ENCODE measurements at regions of chr2 and their contacts with region 1.

Region 1: GRCh38 chr2:129923265-129924091 is 56.0 kb upstream of the RAB6C start:
- H3K4me3 ChIP-seq: peak overlapping the region; percentile 26
- H3K27ac ChIP-seq: no peak overlapping the region
- H3K4me1 ChIP-seq: no peaks in the 10 kb centered on the region
- CTCF ChIP-seq: no peak

Region 2: DNA sequence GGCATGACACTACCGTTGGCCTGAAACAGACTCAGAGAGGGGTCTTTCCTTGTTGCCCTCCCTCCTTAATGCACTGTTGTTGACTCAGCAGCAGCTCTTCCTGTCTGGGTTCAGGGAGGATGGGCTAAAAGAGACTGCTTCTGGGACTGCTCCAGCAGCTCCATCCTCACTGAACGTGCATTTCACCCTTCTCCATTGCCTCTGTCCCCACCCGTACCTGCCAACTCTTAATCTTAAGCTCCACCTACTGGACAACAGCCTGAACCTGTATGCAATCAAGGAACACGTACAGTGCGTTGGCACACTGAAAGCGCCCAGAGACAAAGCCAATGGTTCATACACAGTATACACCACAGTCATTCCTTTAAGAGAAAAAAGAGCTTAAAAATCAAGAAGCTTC is 174.8 kb before region 1 on chr2:
- CTCF ChIA-PET with region 1: interaction called, 10 read pairs
- POLR2A ChIA-PET with region 1: no interaction called
- H3K4me3 ChIP-seq: no peak overlapping the region
- H3K27ac ChIP-seq: no peak overlapping the region
- H3K4me1 ChIP-seq: no peaks in the 10 kb centered on the region
- CTCF ChIP-seq: peak; percentile 52